ENCODE measurements at regions of chr3 and their contacts with region 1.

Region 1: GRCh38 chr3:100463002-100463401 is 29.4 kb upstream of the TMEM45A start:
- DNase-seq: peak; percentile 79
- H3K4me3 Mint-ChIP-seq: no peak overlapping the region
- H3K27ac Mint-ChIP-seq: no peak overlapping the region
- H3K4me1 Mint-ChIP-seq: peaks cover 9% of the 10 kb centered on the region
- H3K27me3 Mint-ChIP-seq: no peaks in the 10 kb centered on the region
- CTCF ChIP-seq: peak; percentile 88

Region 2: DNA sequence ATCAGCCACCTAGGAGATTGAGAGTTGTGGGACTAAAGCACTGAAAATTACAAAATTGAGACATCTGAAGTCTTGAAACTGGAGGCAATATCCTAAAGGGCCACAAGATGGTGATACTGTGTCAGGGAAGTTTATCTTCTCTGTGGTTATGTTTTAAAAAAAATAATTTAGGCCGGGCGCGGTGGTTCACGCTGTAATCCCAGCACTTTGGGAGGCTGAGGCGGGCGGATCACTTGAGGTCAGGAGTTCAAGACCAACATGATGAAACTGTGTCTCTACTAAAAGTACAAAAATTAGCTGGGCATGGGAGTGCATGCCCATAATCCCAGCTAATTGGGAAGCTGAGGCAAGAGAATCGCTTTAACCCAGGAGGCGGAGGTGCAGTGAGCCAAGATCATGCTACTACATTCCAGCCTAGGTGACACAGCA is 146.3 kb before region 1 on chr3:
- CTCF ChIA-PET with region 1: interaction called, 3 read pairs
- POLR2A ChIA-PET with region 1: no interaction called
- intact Hi-C with region 1: loop called (anchors 1 kb)
- DNase-seq: peak; percentile 74
- H3K4me3 Mint-ChIP-seq: no peak overlapping the region
- H3K27ac Mint-ChIP-seq: no peak overlapping the region
- H3K4me1 Mint-ChIP-seq: no peaks in the 10 kb centered on the region
- H3K27me3 Mint-ChIP-seq: no peaks in the 10 kb centered on the region
- CTCF ChIP-seq: peak; percentile 72

Region 3: GRCh38 chr3:100492059-100493006 is 29.3 kb after region 1 on chr3 and contains the start of gene TMEM45A:
- CTCF ChIA-PET with region 1: interaction called, 10 read pairs
- POLR2A ChIA-PET with region 1: interaction called, 3 read pairs
- intact Hi-C with region 1: no loop called
- DNase-seq: peak; percentile 92
- H3K4me3 Mint-ChIP-seq: peak within 1 kb of the TSS; percentile 82
- H3K27ac Mint-ChIP-seq: peak within 1 kb of the TSS; percentile 82
- H3K4me1 Mint-ChIP-seq: peaks cover 12% of the 10 kb centered on the region
- H3K27me3 Mint-ChIP-seq: no peaks in the 10 kb centered on the region
- CTCF ChIP-seq: no peak
- total RNA-seq, gene TMEM45A: 4.1 and 8.0 TPM in 2 replicates

Region 4: DNA sequence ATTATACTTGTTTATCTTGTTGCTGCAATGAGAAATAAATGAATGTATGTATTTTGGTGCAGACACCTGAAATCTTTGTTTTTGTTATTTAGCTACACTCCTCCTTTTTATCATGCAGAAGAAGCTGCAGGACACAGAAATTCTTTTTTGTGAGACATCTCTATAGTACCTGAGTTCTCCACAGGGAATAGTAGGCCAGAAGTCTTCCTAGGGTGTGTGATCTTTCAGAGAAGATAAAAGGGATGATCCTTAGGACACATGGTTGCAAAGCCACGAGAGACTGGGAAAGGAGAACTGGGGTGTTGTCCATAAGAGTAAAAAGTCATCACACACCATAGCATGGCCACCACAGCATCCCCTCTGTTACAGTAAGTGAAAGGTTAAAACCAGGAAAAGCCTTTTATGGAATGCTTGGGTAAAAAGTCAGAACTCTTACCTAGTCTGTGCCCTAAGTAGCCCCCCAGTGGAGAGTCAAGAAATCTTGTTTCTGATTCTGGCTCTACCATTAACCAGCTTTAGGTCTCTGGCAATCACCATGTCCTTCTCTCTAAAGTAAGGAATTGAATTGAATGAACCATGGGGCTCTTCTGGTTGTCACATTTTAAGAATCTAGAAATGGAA is 114.5 kb after region 1 on chr3:
- CTCF ChIA-PET with region 1: interaction called, 405 read pairs
- POLR2A ChIA-PET with region 1: no interaction called
- intact Hi-C with region 1: no loop called
- DNase-seq: no peak
- H3K4me3 Mint-ChIP-seq: no peak overlapping the region
- H3K27ac Mint-ChIP-seq: no peak overlapping the region
- H3K4me1 Mint-ChIP-seq: no peaks in the 10 kb centered on the region
- H3K27me3 Mint-ChIP-seq: no peaks in the 10 kb centered on the region
- CTCF ChIP-seq: no peak

Region 5: DNA sequence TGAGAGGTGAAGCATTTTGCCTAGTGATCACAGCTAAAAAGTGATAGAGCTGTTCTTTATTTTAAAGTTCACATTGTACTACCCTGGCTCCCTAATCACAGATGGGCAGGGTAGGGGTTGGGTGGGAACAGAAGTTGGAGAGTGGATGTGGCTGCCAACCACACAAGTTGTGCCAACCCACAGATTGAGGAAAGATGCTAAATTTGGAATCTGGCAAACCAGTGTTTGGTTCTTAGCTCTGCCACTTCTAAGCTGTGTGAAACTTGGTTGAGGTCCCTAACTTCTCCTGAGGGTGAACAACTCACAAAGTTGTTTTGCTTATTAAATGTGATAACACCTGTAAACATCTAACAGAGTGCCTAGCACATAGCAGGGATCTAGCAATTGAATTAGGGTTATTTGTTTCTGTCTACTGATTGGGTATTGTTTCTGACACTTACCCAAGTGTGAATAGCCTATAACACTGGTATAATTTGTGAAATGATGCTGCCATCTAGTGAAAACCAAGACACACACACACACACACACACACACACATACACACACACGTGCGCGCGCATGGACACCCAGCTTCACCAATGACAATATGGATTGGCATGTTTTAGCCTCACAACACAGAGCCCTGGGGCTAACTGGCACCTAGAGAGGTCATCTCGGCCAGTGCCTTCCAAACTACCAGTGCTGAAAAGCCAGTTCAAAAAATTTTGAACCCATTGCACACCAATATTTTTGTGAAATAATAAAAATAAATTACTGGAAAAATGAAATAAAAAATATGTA is 171.7 kb after region 1 on chr3:
- CTCF ChIA-PET with region 1: interaction called, 20 read pairs
- POLR2A ChIA-PET with region 1: no interaction called
- intact Hi-C with region 1: loop called (anchors 1 kb)
- DNase-seq: peak; percentile 72
- H3K4me3 Mint-ChIP-seq: no peak overlapping the region
- H3K27ac Mint-ChIP-seq: no peak overlapping the region
- H3K4me1 Mint-ChIP-seq: no peaks in the 10 kb centered on the region
- H3K27me3 Mint-ChIP-seq: no peaks in the 10 kb centered on the region
- CTCF ChIP-seq: no peak

Region 6: GRCh38 chr3:101195951-101196713 is 733.1 kb after region 1 on chr3:
- CTCF ChIA-PET with region 1: interaction called, 3 read pairs
- POLR2A ChIA-PET with region 1: no interaction called
- intact Hi-C with region 1: loop called (anchors 1 kb)
- DNase-seq: peak; percentile 72
- H3K4me3 Mint-ChIP-seq: no peak overlapping the region
- H3K27ac Mint-ChIP-seq: peak overlapping the region; percentile 64
- H3K4me1 Mint-ChIP-seq: peaks cover 23% of the 10 kb centered on the region
- H3K27me3 Mint-ChIP-seq: no peaks in the 10 kb centered on the region
- CTCF ChIP-seq: peak; percentile 81

Measured in MCF 10A (cell line).